CD4-positive, alpha-beta memory T cell (primary cell): ENCODE measurements at regions of chr14 and their contacts with region 1.

Region 1: GRCh38 chr14:49867831-49868723 is 15.5 kb upstream of the NEMF start:
- DNase-seq: peak; percentile 92 to 98 (median 96)
- H3K4me3 ChIP-seq: peak overlapping the region; percentile 47 to 54
- H3K4me3 Mint-ChIP-seq: peak overlapping the region; percentile 88 to 96 (median 92)
- H3K27ac ChIP-seq: peak overlapping the region; percentile 92
- H3K27ac Mint-ChIP-seq: peak overlapping the region; percentile 88 to 99 (median 98)
- H3K4me1 ChIP-seq: peaks cover 45% of the 10 kb centered on the region
- H3K4me1 Mint-ChIP-seq: peaks cover 12 to 21% (median 14%) of the 10 kb centered on the region in 4 donors
- H3K27me3 ChIP-seq: no peaks in the 10 kb centered on the region
- H3K27me3 Mint-ChIP-seq: no peaks in the 10 kb centered on the region

Region 2: DNA sequence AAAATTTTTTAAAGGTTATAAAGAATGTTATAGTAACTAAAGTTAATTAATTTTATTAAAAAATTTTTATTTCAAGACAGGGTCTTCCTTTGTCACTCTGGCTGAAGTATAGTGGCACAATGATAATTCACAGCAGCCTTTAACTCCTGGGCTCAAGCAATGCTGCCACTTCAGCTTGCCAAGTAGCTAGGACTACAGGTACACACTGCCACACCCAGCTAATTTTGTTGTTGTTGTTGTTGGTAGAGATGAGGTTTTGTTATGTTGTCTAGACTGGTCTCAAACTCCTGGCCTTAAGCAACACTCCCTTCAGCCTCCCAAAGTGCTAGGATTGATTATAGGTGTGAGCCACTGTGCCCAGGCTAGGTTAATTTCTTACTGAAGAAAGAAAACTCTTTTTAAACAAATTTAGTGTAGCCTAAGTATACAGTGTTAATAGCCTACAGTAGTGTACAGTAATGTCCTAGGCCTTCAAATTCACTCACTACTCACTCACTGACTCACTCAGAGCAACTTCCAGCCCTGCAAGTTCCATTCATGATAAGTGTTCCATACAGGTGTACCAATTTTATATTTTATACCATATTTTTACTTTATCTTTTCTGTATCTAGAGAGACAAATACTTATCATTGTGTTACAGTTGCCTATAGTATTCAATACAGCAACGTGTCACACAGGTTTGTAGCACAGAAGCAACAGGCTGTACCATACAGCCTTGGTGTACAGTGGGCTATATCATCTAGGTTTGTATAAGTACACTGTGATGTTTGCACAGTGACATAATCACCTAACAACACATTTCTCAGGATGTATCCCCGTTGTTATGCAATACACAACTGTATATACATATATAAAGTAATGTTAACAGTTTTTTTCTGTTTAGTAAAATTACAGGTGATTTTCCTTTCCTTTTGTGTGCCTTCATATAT is 208.3 kb before region 1 on chr14:
- CTCF ChIA-PET with region 1: no interaction called
- POLR2A ChIA-PET with region 1: no interaction called
- intact Hi-C with region 1: no loop called
- DNase-seq: no peak
- H3K4me3 ChIP-seq: no peak overlapping the region
- H3K4me3 Mint-ChIP-seq: no peak overlapping the region
- H3K27ac ChIP-seq: no peak overlapping the region
- H3K27ac Mint-ChIP-seq: peak overlapping the region in 1 of 7 donors; percentile 70
- H3K4me1 ChIP-seq: no peaks in the 10 kb centered on the region
- H3K4me1 Mint-ChIP-seq: no peaks in the 10 kb centered on the region
- H3K27me3 ChIP-seq: no peaks in the 10 kb centered on the region
- H3K27me3 Mint-ChIP-seq: no peaks in the 10 kb centered on the region

Region 3: GRCh38 chr14:49808780-49809179 is 59.3 kb before region 1 on chr14:
- CTCF ChIA-PET with region 1: no interaction called
- POLR2A ChIA-PET with region 1: no interaction called
- intact Hi-C with region 1: no loop called
- DNase-seq: no peak
- H3K4me3 ChIP-seq: no peak overlapping the region
- H3K4me3 Mint-ChIP-seq: no peak overlapping the region
- H3K27ac ChIP-seq: no peak overlapping the region
- H3K27ac Mint-ChIP-seq: peak overlapping the region in 1 of 7 donors; percentile 31
- H3K4me1 ChIP-seq: no peaks in the 10 kb centered on the region
- H3K4me1 Mint-ChIP-seq: peaks cover 2 to 8% (median 6%) of the 10 kb centered on the region in 4 donors
- H3K27me3 ChIP-seq: no peaks in the 10 kb centered on the region
- H3K27me3 Mint-ChIP-seq: no peaks in the 10 kb centered on the region

Region 4: DNA sequence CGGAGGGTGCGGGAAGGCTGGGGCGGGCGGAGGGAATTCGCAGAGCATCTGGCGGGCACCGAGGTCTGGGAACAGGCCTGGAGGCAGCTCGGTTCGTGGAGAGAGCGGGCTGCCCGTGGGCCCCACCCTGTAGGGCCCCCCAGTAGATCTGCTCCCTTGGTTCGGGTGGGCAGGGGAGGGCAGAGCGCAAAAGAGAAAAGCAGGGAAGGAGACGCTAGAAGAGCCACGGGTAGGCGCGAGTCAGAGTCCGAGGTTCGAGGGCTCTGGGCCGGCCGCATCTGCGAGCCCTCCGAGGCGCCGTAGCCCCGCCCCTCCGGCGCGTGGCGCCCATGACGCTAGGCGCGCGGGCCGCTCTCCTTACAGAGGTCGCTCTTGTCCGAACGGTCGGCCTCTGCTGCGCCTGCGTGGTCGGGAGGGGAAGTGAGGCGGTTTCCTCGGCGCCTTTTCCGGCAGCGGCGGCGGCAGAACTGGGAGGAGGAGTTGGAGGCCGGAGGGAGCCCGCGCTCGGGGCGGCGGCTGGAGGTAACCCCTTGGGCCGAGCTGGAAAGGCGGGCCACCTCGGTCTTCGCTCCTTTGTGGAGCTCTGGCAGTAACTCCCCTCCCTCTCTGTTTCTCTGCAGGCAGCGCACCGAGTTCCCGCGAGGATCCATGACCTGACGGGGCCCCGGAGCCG is 24.7 kb after region 1 on chr14 and contains the start of gene ARF6:
- CTCF ChIA-PET with region 1: interaction called, 49 read pairs
- POLR2A ChIA-PET with region 1: interaction called, 89 read pairs
- intact Hi-C with region 1: loop called (anchors 1 kb)
- DNase-seq: peak; percentile 92 to 94 (median 92)
- H3K4me3 ChIP-seq: peak within 1 kb of the TSS; percentile 75 to 100
- H3K4me3 Mint-ChIP-seq: peak within 1 kb of the TSS; percentile 95 to 99 (median 98)
- H3K27ac ChIP-seq: peak within 1 kb of the TSS; percentile 98
- H3K27ac Mint-ChIP-seq: peak within 1 kb of the TSS; percentile 93 to 100 (median 99)
- H3K4me1 ChIP-seq: peaks cover 35% of the 10 kb centered on the region
- H3K4me1 Mint-ChIP-seq: peaks cover 13 to 45% (median 22%) of the 10 kb centered on the region in 4 donors
- H3K27me3 ChIP-seq: no peaks in the 10 kb centered on the region
- H3K27me3 Mint-ChIP-seq: no peaks in the 10 kb centered on the region
- total RNA-seq, gene ARF6: 116 to 124 TPM

Region 5: DNA sequence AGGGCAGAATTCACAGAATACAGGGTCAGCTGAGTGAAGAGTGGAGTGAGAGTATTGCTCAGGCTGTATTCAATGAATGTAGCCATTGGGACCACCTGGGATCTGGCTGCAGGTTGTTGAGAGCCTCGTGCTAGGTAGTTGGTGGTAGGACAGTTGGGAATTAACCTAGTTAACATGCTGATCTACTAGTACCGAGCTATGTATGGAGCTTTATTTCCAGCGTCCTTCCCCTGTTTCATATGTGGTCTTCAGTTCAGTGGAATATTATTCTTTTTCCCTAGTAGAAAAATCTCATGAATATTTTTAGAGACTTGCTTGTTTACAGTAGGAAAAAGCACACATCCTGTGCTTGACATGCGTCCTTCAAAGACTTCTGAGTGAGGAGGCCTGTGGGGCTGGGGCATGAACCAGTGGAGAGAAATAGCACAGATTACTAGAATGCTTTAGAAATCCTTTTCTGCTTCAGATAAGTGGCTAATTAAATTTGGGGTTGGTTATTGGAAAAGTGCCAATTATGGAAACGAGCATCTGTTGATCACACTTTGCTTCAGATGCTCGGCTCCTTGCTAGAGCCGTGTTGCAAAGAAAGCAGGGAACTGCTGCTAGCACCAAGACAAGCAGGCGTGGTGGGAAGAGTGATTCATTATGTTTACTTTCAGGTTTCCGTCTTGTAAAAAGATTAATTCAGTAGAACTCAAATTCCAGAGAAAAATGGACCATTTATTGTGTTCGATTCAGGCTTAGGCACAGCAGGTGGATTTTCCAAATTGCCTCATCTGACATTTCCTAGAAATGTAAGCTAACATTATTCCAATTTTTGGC is 78.5 kb after region 1 on chr14:
- CTCF ChIA-PET with region 1: interaction called, 21 read pairs
- POLR2A ChIA-PET with region 1: interaction called, 33 read pairs
- intact Hi-C with region 1: no loop called
- DNase-seq: peak; percentile 40 to 67 (median 41)
- H3K4me3 ChIP-seq: peak overlapping the region in 1 of 2 donors; percentile 11
- H3K4me3 Mint-ChIP-seq: peak overlapping the region; percentile 1 to 78 (median 67)
- H3K27ac ChIP-seq: peak overlapping the region; percentile 64
- H3K27ac Mint-ChIP-seq: peak overlapping the region; percentile 90 to 97 (median 94)
- H3K4me1 ChIP-seq: peaks cover 69% of the 10 kb centered on the region
- H3K4me1 Mint-ChIP-seq: peaks cover 59 to 91% (median 72%) of the 10 kb centered on the region in 4 donors
- H3K27me3 ChIP-seq: no peaks in the 10 kb centered on the region
- H3K27me3 Mint-ChIP-seq: no peaks in the 10 kb centered on the region

Region 6: GRCh38 chr14:49992901-49993335 is 124.8 kb after region 1 on chr14:
- CTCF ChIA-PET with region 1: interaction called, 182 read pairs
- POLR2A ChIA-PET with region 1: interaction called, 321 read pairs
- intact Hi-C with region 1: no loop called
- DNase-seq: no peak
- H3K4me3 ChIP-seq: no peak overlapping the region
- H3K4me3 Mint-ChIP-seq: no peak overlapping the region
- H3K27ac ChIP-seq: no peak overlapping the region
- H3K27ac Mint-ChIP-seq: peak overlapping the region in 1 of 7 donors; percentile 26
- H3K4me1 ChIP-seq: peaks cover 8% of the 10 kb centered on the region
- H3K4me1 Mint-ChIP-seq: peaks cover 13 to 44% (median 20%) of the 10 kb centered on the region in 4 donors
- H3K27me3 ChIP-seq: no peaks in the 10 kb centered on the region
- H3K27me3 Mint-ChIP-seq: no peaks in the 10 kb centered on the region

Region 7: GRCh38 chr14:50099335-50099734 is 231.3 kb after region 1 on chr14:
- CTCF ChIA-PET with region 1: interaction called, 189 read pairs
- POLR2A ChIA-PET with region 1: interaction called, 151 read pairs
- intact Hi-C with region 1: no loop called
- DNase-seq: peak in 1 of 5 donors; percentile 25
- H3K4me3 ChIP-seq: no peak overlapping the region
- H3K4me3 Mint-ChIP-seq: peak overlapping the region in 5 of 8 donors; percentile 7 to 38 (median 28)
- H3K27ac ChIP-seq: no peak overlapping the region
- H3K27ac Mint-ChIP-seq: peak overlapping the region; percentile 10 to 92 (median 80)
- H3K4me1 ChIP-seq: peaks cover 69% of the 10 kb centered on the region
- H3K4me1 Mint-ChIP-seq: peaks cover 41 to 68% (median 54%) of the 10 kb centered on the region in 4 donors
- H3K27me3 ChIP-seq: no peaks in the 10 kb centered on the region
- H3K27me3 Mint-ChIP-seq: no peaks in the 10 kb centered on the region

Region 8: GRCh38 chr14:50116181-50116956 is 248.3 kb after region 1 on chr14 and contains the start of gene VCPKMT:
- CTCF ChIA-PET with region 1: interaction called, 39 read pairs
- POLR2A ChIA-PET with region 1: interaction called, 77 read pairs
- intact Hi-C with region 1: no loop called
- DNase-seq: peak; percentile 93 to 96 (median 95)
- H3K4me3 ChIP-seq: peak within 1 kb of the TSS; percentile 65 to 69
- H3K4me3 Mint-ChIP-seq: peak within 1 kb of the TSS; percentile 97 to 98 (median 98)
- H3K27ac ChIP-seq: peak within 1 kb of the TSS; percentile 93
- H3K27ac Mint-ChIP-seq: peak within 1 kb of the TSS; percentile 96 to 100 (median 99)
- H3K4me1 ChIP-seq: peaks cover 34% of the 10 kb centered on the region
- H3K4me1 Mint-ChIP-seq: peaks cover 10 to 32% (median 23%) of the 10 kb centered on the region in 4 donors
- H3K27me3 ChIP-seq: no peaks in the 10 kb centered on the region
- H3K27me3 Mint-ChIP-seq: no peaks in the 10 kb centered on the region
- total RNA-seq, gene VCPKMT: 17.3 to 20.1 TPM